ENCODE measurements at regions of chr5 and their contacts with region 1.

Region 1: DNA sequence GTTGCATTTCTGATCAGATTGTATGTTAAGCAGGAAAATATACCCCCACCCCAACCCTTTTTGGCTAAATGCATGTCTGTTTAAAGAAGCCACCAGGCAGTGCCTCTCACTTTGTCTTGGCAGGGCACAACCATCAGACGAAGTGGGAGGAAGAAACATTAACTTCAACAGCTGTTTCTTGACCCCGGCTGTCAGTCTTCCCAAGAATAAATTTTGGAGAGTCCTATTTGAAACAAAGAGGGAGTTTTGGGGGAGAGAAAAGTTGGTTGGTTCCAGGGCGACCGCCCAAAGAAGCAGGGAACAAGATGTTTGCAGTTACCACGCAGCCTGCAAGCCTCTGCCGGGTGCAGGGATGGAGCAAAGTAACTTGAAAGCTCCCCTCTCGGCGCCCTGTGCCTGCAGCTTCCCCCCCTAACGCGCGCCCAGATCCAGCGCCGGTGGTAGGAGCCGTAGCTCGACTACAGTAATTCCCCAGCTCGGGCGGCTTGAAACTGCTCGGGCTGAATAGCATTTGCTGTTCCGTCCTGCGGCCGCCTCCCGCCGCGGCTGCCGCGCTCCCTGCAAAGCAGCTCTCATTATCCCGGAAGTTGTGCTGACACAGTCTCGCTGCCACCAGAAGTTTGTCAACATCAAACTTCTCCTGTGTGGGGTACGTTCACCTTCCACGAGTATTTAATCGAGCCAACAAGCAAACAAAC is 100.7 kb upstream of the SSBP2 start:
- DNase-seq: peak; percentile 98
- H3K4me3 ChIP-seq: peak overlapping the region; percentile 68
- H3K27ac ChIP-seq: peak overlapping the region; percentile 99
- H3K4me1 ChIP-seq: peaks cover 82% of the 10 kb centered on the region
- H3K27me3 ChIP-seq: no peaks in the 10 kb centered on the region
- CTCF ChIP-seq: no peak

Region 2: DNA sequence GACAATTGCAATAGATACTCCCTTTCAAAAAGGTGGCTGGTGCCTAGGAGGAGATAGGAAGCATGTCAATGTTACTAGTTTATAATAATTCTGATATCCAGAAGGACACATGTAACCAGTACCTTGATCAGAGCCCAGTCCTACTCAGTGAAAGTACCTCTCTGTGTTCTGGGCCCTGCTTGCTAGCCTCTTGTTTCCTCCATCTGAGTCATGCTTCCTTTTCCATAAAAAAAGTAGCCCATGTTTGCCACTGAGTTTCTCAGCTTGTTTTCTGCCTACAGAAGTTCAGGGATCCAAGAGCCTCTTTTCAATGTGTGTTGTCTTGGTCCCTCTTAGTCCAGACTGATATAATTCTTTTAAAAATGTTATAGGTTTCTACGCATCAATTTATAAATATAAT is 249.7 kb before region 1 on chr5:
- intact Hi-C with region 1: no loop called
- DNase-seq: no peak
- H3K4me3 ChIP-seq: no peak overlapping the region
- H3K27ac ChIP-seq: no peak overlapping the region
- H3K4me1 ChIP-seq: peaks cover 10% of the 10 kb centered on the region
- H3K27me3 ChIP-seq: no peaks in the 10 kb centered on the region
- CTCF ChIP-seq: no peak

Region 3: DNA sequence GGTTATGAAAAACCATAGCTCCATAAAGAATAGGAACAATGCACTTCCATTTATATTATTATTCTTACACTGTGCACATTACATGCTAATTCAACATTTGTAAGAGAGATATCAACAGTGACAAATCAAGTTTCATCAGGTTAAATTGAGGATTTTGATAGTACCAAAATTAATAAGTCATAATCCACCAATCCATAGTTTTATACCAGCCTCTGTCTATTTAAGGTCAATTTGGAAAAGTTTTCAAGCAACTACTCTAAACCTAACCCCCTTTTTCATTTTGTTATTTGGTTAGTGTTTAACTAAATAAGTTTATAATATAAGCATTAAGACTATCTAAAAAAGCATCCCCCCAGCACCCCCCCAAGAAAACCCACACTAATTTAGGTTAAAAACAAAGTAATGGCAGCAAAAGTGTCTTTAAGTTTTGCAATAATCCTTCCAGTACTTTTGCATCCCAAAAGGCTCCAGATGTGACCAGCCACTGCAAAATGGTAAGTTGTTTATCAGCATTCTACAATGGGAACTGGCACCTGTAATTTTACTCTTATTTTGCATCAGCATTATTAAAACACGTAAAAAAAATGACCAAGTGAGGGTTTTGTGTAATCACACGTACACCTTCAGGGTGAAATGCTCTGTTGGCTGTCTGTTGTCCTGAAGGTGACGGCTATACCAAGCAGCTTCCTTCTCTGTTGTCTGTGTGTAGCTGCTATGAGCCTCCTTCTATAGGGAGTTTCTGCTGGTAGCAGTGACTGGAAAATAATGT is 64.0 kb before region 1 on chr5:
- intact Hi-C with region 1: loop called (anchors 5 kb)
- DNase-seq: no peak
- H3K4me3 ChIP-seq: peak overlapping the region; percentile 28
- H3K27ac ChIP-seq: peak overlapping the region; percentile 65
- H3K4me1 ChIP-seq: peaks cover 23% of the 10 kb centered on the region
- H3K27me3 ChIP-seq: no peaks in the 10 kb centered on the region
- CTCF ChIP-seq: no peak

Region 4: GRCh38 chr5:81971712-81972495 is 120.3 kb after region 1 on chr5 and contains the start of gene ATG10:
- intact Hi-C with region 1: loop called (anchors 10 kb)
- DNase-seq: peak; percentile 92
- H3K4me3 ChIP-seq: peak within 1 kb of the TSS; percentile 80
- H3K27ac ChIP-seq: peak within 1 kb of the TSS; percentile 97
- H3K4me1 ChIP-seq: peaks cover 14% of the 10 kb centered on the region
- H3K27me3 ChIP-seq: no peaks in the 10 kb centered on the region
- CTCF ChIP-seq: no peak
- total RNA-seq, gene ATG10: 6.0 TPM

Region 5: DNA sequence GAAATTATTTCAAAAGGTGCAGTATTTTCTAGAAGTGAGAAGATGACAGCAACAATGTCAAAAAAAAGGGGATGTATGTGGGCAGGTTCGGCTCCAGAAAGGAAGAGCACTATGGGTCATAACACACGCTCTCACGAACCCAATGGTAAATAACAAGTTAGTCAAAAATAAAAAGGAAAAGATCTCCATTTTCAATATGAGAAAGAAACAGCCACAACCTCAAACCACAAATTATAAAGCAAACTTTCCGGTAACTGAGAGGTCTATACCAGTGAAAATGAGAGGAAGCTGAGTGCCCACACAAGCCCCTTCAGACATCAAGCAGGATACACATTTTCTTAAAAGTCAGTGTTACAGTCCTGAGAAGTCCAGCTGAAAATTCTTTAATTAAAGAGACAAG is 825.0 kb after region 1 on chr5:
- intact Hi-C with region 1: no loop called
- DNase-seq: no peak
- H3K4me3 ChIP-seq: no peak overlapping the region
- H3K27ac ChIP-seq: no peak overlapping the region
- H3K4me1 ChIP-seq: no peaks in the 10 kb centered on the region
- H3K27me3 ChIP-seq: no peaks in the 10 kb centered on the region
- CTCF ChIP-seq: no peak

Measured in left ventricle myocardium inferior (tissue), 1 donor.